ENCODE measurements at regions of chr7 and their contacts with region 1.

Region 1: GRCh38 chr7:88278882-88279281 is 27.8 kb downstream of the STEAP4 start:
- DNase-seq: peak; percentile 79 to 92 (median 90)
- H3K4me3 ChIP-seq: peak overlapping the region in 1 of 3 experiments; percentile 21
- H3K4me3 Mint-ChIP-seq: no peak overlapping the region
- H3K27ac ChIP-seq: peak overlapping the region; percentile 9 to 70
- H3K27ac Mint-ChIP-seq: peak overlapping the region; percentile 79 to 95 (median 91)
- H3K4me1 ChIP-seq: peaks cover 27 to 53% of the 10 kb centered on the region in 2 donors
- H3K4me1 Mint-ChIP-seq: peaks cover 47% of the 10 kb centered on the region
- H3K27me3 ChIP-seq: no peaks in the 10 kb centered on the region
- H3K27me3 Mint-ChIP-seq: peaks cover 1 to 2% (median 2%) of the 10 kb centered on the region in 3 donors
- CTCF ChIP-seq: no peak

Region 2: DNA sequence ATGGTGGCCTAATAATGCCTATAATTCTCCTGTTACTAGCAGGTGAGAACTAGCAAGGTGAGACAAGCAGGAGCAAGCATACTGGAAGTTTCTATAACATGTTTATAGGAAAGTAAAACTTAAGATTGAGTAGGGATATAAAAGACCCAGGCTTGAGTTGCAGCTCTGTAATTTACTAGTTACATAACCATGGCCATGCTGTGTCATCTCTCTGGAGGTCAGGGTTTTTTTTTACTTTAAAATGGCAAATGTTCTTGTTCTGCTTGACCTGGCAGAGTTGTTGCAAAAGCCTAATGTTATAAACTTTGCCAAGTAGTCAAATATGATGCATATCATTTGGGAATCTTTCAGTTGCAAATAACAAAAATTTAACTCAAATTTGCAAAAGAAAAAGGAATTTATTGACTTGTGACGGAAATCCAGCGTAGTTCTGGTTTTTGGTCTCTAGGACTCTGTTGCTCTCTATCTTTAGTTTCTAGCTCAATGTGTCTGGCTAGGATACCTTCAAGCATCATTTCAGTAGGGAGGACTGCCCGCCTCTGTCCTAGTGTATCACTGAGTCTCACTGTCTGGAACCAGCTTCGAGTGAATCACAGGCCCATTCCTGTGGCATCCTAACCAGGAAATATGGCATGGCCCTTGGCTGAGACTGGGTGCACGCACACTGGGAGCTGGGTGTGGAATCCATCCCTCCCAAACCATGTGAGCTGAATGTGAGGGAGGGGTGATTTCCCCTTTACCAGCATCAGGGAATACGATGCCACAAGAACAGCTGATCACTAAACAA is 276.9 kb before region 1 on chr7:
- intact Hi-C with region 1: no loop called
- DNase-seq: no peak
- H3K4me3 ChIP-seq: no peak overlapping the region
- H3K4me3 Mint-ChIP-seq: no peak overlapping the region
- H3K27ac ChIP-seq: no peak overlapping the region
- H3K27ac Mint-ChIP-seq: no peak overlapping the region
- H3K4me1 ChIP-seq: no peaks in the 10 kb centered on the region
- H3K4me1 Mint-ChIP-seq: peaks cover 7% of the 10 kb centered on the region
- H3K27me3 ChIP-seq: no peaks in the 10 kb centered on the region
- H3K27me3 Mint-ChIP-seq: peaks cover 0 to 3% (median 0%) of the 10 kb centered on the region in 3 donors
- CTCF ChIP-seq: no peak

Region 3: DNA sequence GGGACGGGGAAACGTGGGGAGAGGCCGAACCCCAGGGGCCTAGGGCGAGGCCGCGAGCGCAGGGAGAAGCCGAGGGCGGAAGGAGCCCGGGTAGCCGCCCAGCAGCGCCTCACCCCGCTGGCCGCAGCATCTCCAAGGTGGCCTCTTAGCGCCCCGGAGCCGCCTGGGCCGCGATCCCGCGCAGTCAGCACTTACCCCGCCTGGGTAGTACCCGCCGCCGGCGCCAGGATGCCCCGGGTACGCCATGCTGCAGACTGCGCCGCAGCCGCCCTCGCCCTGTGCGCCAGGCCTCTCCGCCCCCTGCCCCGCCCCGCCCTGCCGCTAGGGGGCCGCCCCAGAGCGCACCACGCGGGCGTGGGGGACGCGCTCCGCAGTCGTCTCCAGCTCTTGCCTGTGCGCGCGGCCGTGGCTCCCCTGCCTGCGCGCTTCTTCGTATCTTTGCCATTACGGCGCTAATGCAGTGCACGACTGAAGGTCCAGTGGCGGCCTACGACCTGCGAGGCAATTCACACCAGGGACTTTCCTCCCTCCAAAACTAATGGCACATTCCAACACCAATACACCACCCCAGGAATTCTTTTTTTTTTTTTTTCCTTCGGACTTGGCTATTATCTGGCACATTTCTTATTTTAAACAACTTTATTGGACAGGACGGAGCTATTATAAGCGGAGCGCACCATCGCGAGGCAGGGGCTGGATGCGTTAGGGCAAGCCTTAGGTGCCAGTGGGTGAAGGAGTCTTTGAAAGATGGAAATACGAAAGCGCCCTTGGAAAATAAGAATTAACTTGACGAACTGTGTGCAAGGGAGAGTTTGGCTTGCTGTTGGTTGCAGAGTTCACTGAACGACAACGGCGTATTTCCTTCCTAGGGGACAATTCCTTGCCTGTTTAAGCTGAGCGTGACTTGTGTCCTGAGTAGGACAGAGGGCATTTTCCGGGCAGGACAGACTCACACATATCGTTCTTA is 58.8 kb before region 1 on chr7 and contains the start of gene SRI:
- intact Hi-C with region 1: loop called in 1 of 2 experiments (anchors 10 kb)
- DNase-seq: peak; percentile 82 to 87 (median 85)
- H3K4me3 ChIP-seq: peak within 1 kb of the TSS; percentile 59 to 91 (median 86)
- H3K4me3 Mint-ChIP-seq: peak within 1 kb of the TSS; percentile 92 to 98
- H3K27ac ChIP-seq: peak within 1 kb of the TSS; percentile 76 to 94
- H3K27ac Mint-ChIP-seq: peak within 1 kb of the TSS; percentile 97 to 100 (median 99)
- H3K4me1 ChIP-seq: peaks cover 34 to 47% of the 10 kb centered on the region in 2 donors
- H3K4me1 Mint-ChIP-seq: peaks cover 43% of the 10 kb centered on the region
- H3K27me3 ChIP-seq: no peaks in the 10 kb centered on the region
- H3K27me3 Mint-ChIP-seq: peaks cover 0 to 1% (median 0%) of the 10 kb centered on the region in 3 donors
- CTCF ChIP-seq: peak; percentile 100
- polyA plus RNA-seq, gene SRI: 53.0 to 238 (median 216) TPM

Region 4: GRCh38 chr7:88312061-88312663 is 33.3 kb after region 1 on chr7:
- intact Hi-C with region 1: loop called in 1 of 2 experiments (anchors 5 kb)
- DNase-seq: no peak
- H3K4me3 ChIP-seq: no peak overlapping the region
- H3K4me3 Mint-ChIP-seq: no peak overlapping the region
- H3K27ac ChIP-seq: no peak overlapping the region
- H3K27ac Mint-ChIP-seq: peak overlapping the region in 4 of 7 donors; percentile 36 to 81 (median 60)
- H3K4me1 ChIP-seq: peaks cover 58 to 69% of the 10 kb centered on the region in 2 donors
- H3K4me1 Mint-ChIP-seq: peaks cover 59% of the 10 kb centered on the region
- H3K27me3 ChIP-seq: no peaks in the 10 kb centered on the region
- H3K27me3 Mint-ChIP-seq: peaks cover 0 to 5% (median 3%) of the 10 kb centered on the region in 3 donors
- CTCF ChIP-seq: no peak

Region 5: GRCh38 chr7:88985295-88985694 is 706.4 kb after region 1 on chr7:
- intact Hi-C with region 1: no loop called
- DNase-seq: no peak
- H3K4me3 ChIP-seq: no peak overlapping the region
- H3K4me3 Mint-ChIP-seq: no peak overlapping the region
- H3K27ac ChIP-seq: no peak overlapping the region
- H3K27ac Mint-ChIP-seq: no peak overlapping the region
- H3K4me1 ChIP-seq: no peaks in the 10 kb centered on the region
- H3K4me1 Mint-ChIP-seq: no peaks in the 10 kb centered on the region
- H3K27me3 ChIP-seq: no peaks in the 10 kb centered on the region
- H3K27me3 Mint-ChIP-seq: peaks cover 0 to 2% (median 0%) of the 10 kb centered on the region in 3 donors
- CTCF ChIP-seq: no peak